Mammary epithelial cell (primary cell): ENCODE measurements at regions of chr15 and their contacts with region 1.

Region 1: DNA sequence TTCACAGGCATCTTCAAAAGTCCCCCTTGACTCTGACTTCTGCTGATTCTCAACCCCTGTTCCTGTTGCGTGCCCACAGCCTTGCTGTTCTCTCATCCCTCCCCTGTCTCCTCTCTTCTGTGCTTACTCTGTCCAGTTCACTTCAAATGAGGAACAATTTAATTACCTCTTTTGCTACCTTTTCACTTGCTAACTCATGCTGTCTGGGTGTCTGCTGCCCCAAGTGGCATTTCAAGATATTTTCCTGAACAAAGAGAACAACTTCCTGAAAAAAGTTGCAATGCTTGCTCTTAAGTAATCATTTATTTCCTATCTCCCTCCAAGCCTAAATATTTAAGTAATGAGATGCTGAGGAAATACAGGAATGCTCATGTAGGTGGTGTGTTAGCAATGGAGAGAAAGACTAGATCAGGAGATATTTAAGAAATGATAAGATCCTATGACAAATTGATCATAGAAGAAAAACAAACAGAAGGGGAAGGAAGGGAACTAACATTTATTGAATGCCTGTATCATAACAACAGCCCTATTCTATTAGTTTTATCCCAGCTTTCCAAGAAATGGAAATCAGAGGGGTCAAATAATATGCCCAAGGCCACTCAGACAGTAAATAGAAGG is 42.2 kb downstream of the SV2B start:
- DNase-seq: peak; percentile 5
- H3K4me3 ChIP-seq: no peak overlapping the region
- H3K27ac ChIP-seq: no peak overlapping the region
- H3K4me1 ChIP-seq: no peaks in the 10 kb centered on the region
- H3K27me3 ChIP-seq: no peaks in the 10 kb centered on the region
- CTCF ChIP-seq: peak; percentile 45 to 58

Region 2: GRCh38 chr15:90937898-90938660 is 204.1 kb before region 1 on chr15:
- CTCF ChIA-PET with region 1: no interaction called
- dilution Hi-C with region 1: no loop called
- in situ Hi-C with region 1: no loop called
- intact Hi-C with region 1: no loop called
- DNase-seq: no peak
- H3K4me3 ChIP-seq: no peak overlapping the region
- H3K27ac ChIP-seq: no peak overlapping the region
- H3K4me1 ChIP-seq: peaks cover 18% of the 10 kb centered on the region
- H3K27me3 ChIP-seq: no peaks in the 10 kb centered on the region
- CTCF ChIP-seq: no peak

Region 3: GRCh38 chr15:91224755-91225380 is 82.6 kb after region 1 on chr15:
- CTCF ChIA-PET with region 1: no interaction called
- dilution Hi-C with region 1: no loop called
- in situ Hi-C with region 1: no loop called
- intact Hi-C with region 1: loop called (anchors 10 kb)
- DNase-seq: peak; percentile 37
- H3K4me3 ChIP-seq: no peak overlapping the region
- H3K27ac ChIP-seq: no peak overlapping the region
- H3K4me1 ChIP-seq: no peaks in the 10 kb centered on the region
- H3K27me3 ChIP-seq: peaks cover 3% of the 10 kb centered on the region
- CTCF ChIP-seq: peak; percentile 63 to 85

Region 4: DNA sequence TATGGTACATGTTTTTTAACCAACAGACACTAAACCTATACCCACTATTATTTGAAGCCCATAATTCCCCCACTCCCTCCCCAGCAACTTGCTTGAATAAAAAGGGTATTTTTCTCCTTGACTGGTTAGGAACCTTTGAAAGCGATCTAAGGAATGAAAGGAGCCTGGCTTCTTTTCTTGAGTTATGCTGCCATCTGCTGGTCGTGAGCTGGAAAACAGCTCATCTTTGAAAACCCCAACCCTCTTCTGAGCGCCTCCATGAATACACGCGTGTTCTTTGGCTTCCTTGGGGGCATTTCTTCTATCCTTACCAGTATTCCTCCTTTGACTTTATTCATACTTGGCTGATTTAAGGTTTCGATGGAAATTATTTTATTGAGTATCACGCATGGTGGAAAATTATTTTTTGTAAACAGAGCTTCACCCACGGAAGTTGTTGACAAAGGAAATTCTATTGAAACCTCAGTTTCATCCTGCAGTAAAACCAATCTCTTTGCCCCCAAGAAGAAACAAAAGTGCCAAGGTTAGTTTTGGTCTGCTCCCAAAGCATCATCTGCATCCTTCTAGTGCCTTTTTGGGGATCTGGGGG is 129.4 kb after region 1 on chr15:
- CTCF ChIA-PET with region 1: no interaction called
- dilution Hi-C with region 1: no loop called
- in situ Hi-C with region 1: no loop called
- intact Hi-C with region 1: no loop called
- DNase-seq: peak; percentile 42
- H3K4me3 ChIP-seq: no peak overlapping the region
- H3K27ac ChIP-seq: no peak overlapping the region
- H3K4me1 ChIP-seq: no peaks in the 10 kb centered on the region
- H3K27me3 ChIP-seq: no peaks in the 10 kb centered on the region
- CTCF ChIP-seq: peak; percentile 52 to 81